Activated T-helper 2 cell treated with anti-CD3 and anti-CD28 coated beads, Interferon-gamma antibody, Interleukin-2, Interleukin-4, amounts not matched to agents 10 μg/mL and 5 μg/mL and 100 μg/mL, durations not matched to agents 14 hours and 24 hours and 36 hours (primary cell): ENCODE measurements at regions of chr2 and their contacts with region 1.

Region 1: GRCh38 chr2:151261231-151261976 is at the start of gene RBM43:
- DNase-seq: peak; percentile 86
- H3K4me3 Mint-ChIP-seq: peak within 1 kb of the TSS; percentile 92
- H3K27ac Mint-ChIP-seq: peak within 1 kb of the TSS; percentile 97
- H3K4me1 Mint-ChIP-seq: peaks cover 23% of the 10 kb centered on the region
- H3K27me3 Mint-ChIP-seq: no peaks in the 10 kb centered on the region
- total RNA-seq, gene RBM43: 2.6 and 2.8 TPM in 2 replicates

Region 2: GRCh38 chr2:151409601-151410484 is 148.4 kb after region 1 on chr2 and contains the start of gene RIF1:
- intact Hi-C with region 1: loop called (anchors 2 kb)
- DNase-seq: peak; percentile 68
- H3K4me3 Mint-ChIP-seq: peak within 1 kb of the TSS; percentile 93
- H3K27ac Mint-ChIP-seq: peak within 1 kb of the TSS; percentile 92
- H3K4me1 Mint-ChIP-seq: peaks cover 17% of the 10 kb centered on the region
- H3K27me3 Mint-ChIP-seq: peaks cover 2% of the 10 kb centered on the region
- total RNA-seq, gene RIF1: 67.1 and 72.1 TPM in 2 replicates

Region 3: DNA sequence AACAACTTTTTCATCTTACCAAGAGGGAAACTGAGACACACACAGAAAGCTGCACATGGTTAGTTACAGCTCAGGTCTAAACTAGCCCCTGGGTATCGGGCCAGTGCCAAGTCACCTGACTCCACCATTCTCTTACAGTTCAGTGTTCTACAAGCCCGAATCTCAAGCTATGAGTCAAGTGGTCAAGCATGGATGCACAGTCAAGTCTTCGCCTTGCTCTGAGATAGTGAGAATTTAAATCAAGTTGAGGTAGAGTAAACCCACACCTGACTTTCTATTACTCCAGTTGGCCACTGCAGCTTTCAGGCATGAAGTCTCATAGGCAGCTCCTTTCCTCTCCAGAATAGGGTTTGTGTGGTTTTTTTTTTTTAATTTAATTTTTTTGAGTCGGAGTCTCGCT is 601.3 kb after region 1 on chr2:
- intact Hi-C with region 1: no loop called
- DNase-seq: no peak
- H3K4me3 Mint-ChIP-seq: no peak overlapping the region
- H3K27ac Mint-ChIP-seq: no peak overlapping the region
- H3K4me1 Mint-ChIP-seq: no peaks in the 10 kb centered on the region
- H3K27me3 Mint-ChIP-seq: peaks cover 5% of the 10 kb centered on the region